ENCODE measurements at regions of chr12 and their contacts with region 1.

Region 1: DNA sequence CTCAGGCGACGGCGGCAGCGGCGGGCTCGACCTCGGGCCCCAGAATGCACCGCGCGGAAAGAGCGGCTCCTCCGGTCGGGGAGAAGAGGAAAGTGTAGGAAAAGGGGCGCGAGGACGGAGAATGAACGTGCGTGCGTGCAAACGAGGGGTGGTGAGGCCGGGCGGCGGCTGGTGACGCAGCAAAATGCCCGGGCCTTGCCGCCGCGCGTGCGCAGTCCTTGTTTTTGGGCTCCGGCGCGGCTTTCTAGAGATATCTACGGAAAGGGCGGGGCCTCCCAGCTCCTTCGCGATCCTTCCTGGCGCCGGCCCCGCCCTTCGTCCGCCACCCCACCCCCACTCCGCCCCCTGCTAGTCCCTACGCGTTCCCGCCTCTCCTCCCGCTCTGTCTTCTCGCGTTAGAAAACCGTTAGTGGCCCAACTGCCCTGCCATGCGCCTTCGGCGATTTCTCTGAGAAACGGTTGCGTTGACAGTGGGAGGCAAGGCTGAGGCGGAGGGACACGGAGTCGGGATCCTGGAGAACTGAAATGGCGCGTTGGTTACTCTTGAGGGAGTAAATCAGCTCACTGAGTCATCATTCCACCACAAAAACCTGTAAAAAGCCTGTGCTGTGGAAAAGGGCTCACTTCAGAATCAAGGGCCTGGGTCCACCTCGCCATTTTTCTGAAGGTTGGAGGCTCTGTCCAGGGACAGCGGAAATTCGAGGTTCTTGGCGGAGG is at the start of gene PTGES3:
- DNase-seq: peak; percentile 98
- H3K4me3 Mint-ChIP-seq: peak within 1 kb of the TSS; percentile 100
- H3K27ac Mint-ChIP-seq: peak within 1 kb of the TSS; percentile 100
- H3K4me1 Mint-ChIP-seq: peaks cover 23% of the 10 kb centered on the region
- H3K27me3 Mint-ChIP-seq: no peaks in the 10 kb centered on the region
- total RNA-seq, gene PTGES3: 301 and 302 TPM in 2 replicates

Region 2: GRCh38 chr12:56158029-56158925 is 530.0 kb before region 1 on chr12 and contains the start of gene MYL6:
- intact Hi-C with region 1: loop called (anchors 10 kb)
- DNase-seq: peak; percentile 90
- H3K4me3 Mint-ChIP-seq: peak within 1 kb of the TSS; percentile 97
- H3K27ac Mint-ChIP-seq: peak within 1 kb of the TSS; percentile 93
- H3K4me1 Mint-ChIP-seq: peaks cover 49% of the 10 kb centered on the region
- H3K27me3 Mint-ChIP-seq: no peaks in the 10 kb centered on the region
- total RNA-seq, gene MYL6: 786 and 802 TPM in 2 replicates

Region 3: DNA sequence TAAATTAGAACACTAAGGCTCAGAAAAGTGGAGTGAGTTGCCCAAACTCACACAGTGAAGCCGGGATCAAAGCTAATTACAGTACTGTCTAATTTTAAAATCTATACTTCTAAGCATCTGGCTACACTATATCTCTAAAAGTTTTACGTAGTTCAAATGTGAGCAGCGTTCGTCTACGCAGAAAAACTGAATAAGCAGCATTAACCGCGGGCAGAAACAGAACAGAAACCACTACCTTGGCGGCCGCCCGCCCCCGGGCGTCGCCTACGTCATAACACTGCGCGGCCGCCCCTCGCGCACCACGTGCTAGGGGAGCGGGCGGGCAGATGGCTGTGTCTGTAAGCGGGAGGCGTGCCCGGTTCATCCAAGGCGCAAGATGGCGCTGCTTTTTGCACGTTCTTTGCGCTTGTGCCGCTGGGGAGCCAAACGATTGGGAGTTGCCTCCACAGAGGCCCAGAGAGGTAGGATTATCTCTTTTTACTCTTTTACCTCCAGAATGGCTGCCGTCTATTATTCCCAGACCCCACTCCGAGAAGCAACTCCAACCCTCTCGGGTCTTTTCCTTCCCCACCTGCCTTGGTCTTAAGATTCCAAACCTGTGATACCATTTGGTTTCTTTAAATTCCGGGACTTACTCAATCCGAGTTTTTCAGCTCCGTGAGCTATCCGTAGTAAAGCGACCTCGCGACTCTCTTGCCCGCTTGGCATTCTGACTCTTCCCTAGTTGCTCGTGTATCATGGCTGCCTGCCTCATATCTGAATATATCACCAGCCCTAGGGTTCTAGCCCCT is 219.9 kb before region 1 on chr12 and contains the start of gene SPRYD4:
- intact Hi-C with region 1: loop called (anchors 1 kb)
- DNase-seq: peak; percentile 94
- H3K4me3 Mint-ChIP-seq: peak within 1 kb of the TSS; percentile 99
- H3K27ac Mint-ChIP-seq: peak within 1 kb of the TSS; percentile 98
- H3K4me1 Mint-ChIP-seq: peaks cover 19% of the 10 kb centered on the region
- H3K27me3 Mint-ChIP-seq: no peaks in the 10 kb centered on the region
- total RNA-seq, gene SPRYD4: 5.0 and 5.5 TPM in 2 replicates

Region 4: DNA sequence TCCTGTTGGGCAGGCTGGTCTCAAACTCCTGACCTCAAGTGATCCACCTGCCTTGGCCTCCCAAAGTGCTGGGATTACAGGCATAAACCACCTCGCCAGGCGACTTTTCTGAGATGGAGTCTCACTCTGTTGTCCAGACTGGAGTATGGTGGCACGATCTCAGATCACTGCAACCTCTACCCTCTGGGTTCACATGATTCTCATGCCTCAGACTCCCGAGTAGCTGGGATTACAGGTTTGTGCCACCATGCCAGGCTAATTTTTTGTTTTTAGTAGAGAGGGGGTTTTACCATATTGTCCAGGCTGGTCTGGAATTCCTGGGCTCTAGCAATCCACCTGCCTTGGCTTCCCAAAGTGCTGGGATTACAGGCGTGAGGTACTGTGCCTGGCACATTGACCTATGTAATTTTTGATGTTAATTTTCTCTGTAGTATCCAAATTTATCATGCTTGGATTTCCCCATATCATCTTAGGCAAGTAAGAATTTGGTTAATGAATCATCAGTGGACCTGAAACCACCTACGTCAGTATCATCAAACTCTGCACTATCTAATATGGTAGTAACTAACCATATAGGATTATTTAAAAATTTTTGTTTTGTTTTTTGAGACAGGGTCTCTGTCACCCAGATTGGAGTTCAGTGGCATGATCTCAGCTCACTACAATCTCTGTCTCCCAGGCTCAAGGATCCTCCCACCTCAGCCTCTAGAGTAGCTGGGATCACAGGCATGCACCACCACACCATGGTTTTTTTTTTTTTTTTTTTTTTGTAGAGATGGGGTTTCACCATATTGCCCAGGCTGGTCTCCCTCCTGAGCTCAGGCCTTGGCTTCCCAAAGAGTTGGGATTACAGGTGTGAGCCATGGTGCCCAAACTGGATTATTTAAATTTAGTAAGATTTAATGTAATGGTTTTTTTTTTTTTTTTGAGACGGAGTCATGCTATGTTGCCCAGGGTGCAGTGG is 30.6 kb before region 1 on chr12:
- intact Hi-C with region 1: loop called (anchors 1 kb)
- DNase-seq: no peak
- H3K4me3 Mint-ChIP-seq: no peak overlapping the region
- H3K27ac Mint-ChIP-seq: peak overlapping the region; percentile 67
- H3K4me1 Mint-ChIP-seq: peaks cover 7% of the 10 kb centered on the region
- H3K27me3 Mint-ChIP-seq: no peaks in the 10 kb centered on the region

Region 5: GRCh38 chr12:57088459-57089248 is 400.4 kb after region 1 on chr12 and contains the start of gene NAB2:
- intact Hi-C with region 1: loop called (anchors 1 kb)
- DNase-seq: peak; percentile 88
- H3K4me3 Mint-ChIP-seq: peak within 1 kb of the TSS; percentile 97
- H3K27ac Mint-ChIP-seq: peak within 1 kb of the TSS; percentile 98
- H3K4me1 Mint-ChIP-seq: peaks cover 77% of the 10 kb centered on the region
- H3K27me3 Mint-ChIP-seq: no peaks in the 10 kb centered on the region
- total RNA-seq, gene NAB2: 73.6 and 80.3 TPM in 2 replicates

Measured in activated T-helper 1 cell treated with anti-CD3 and anti-CD28 coated beads, Interleukin-12 subunit alpha, Interleukin-12 subunit beta, Interleukin-2, Interleukin-4 antibody, amounts not matched to agents 30 ng/mL and 10 ng/mL and 1 ng/mL, durations not matched to agents 14 hours and 24 hours and 36 hours (primary cell).